ENCODE measurements at regions of chr6 and their contacts with region 1.

Region 1: GRCh38 chr6:125314019-125314581 is 12.3 kb upstream of the HDDC2 start:
- DNase-seq: peak; percentile 63 to 77 (median 69)
- ATAC-seq: peak; percentile 83 to 95 (median 91)
- H3K4me3 ChIP-seq: no peak overlapping the region
- H3K27ac ChIP-seq: peak overlapping the region in 2 of 12 donors; percentile 24 to 25
- H3K4me1 ChIP-seq: peaks cover 0 to 6% (median 1%) of the 10 kb centered on the region in 12 donors
- H3K27me3 ChIP-seq: peaks cover 0 to 3% (median 0%) of the 10 kb centered on the region in 9 donors
- CTCF ChIP-seq: peak; percentile 72 to 97 (median 88)
- POLR2A ChIP-seq: no peak

Region 2: DNA sequence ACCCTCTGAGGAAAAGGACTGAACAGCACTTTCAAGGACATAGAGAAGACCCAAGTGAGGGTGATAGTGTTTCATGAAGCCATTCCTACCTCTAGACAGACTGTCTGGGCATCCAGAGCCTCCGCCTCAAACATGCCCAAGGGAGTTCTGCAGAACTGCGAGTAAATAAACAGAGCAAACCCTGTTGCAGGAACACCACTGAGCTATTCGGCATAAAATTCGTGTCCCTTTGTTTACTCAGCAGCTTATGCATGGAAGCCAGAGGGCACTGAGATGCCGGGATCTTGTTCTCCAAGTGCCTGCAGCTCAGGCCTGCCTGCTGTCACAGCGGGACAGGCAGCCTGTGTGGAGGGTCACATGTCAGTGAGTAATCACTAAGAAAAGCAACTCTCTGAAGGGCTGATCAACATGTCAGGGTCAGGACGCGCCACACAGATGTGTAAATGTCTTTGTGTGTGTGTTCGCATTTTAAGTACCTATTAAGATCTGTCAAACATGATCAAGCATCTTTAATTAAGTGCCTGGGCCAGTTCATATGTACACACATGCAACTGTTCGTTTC is 270.4 kb after region 1 on chr6:
- intact Hi-C with region 1: loop called in 3 of 10 experiments (anchors 5 to 10 kb)
- DNase-seq: peak; percentile 61 to 84 (median 74)
- ATAC-seq: peak; percentile 93 to 96 (median 94)
- H3K4me3 ChIP-seq: no peak overlapping the region
- H3K27ac ChIP-seq: peak overlapping the region in 11 of 12 donors; percentile 31 to 82 (median 65)
- H3K4me1 ChIP-seq: peaks cover 0 to 26% (median 3%) of the 10 kb centered on the region in 12 donors
- H3K27me3 ChIP-seq: no peaks in the 10 kb centered on the region
- CTCF ChIP-seq: peak in 7 of 12 donors; percentile 19 to 55 (median 33)
- POLR2A ChIP-seq: peak in 1 of 2 donors; percentile 17

Region 3: GRCh38 chr6:125764121-125764671 is 450.1 kb after region 1 on chr6:
- intact Hi-C with region 1: loop called (anchors 1 to 5 kb)
- DNase-seq: no peak
- ATAC-seq: no peak
- H3K4me3 ChIP-seq: no peak overlapping the region
- H3K27ac ChIP-seq: peak overlapping the region in 4 of 12 donors; percentile 1 to 26 (median 16)
- H3K4me1 ChIP-seq: peaks cover 0 to 49% (median 4%) of the 10 kb centered on the region in 12 donors
- H3K27me3 ChIP-seq: peaks cover 0 to 7% (median 0%) of the 10 kb centered on the region in 9 donors
- CTCF ChIP-seq: no peak
- POLR2A ChIP-seq: no peak

Region 4: DNA sequence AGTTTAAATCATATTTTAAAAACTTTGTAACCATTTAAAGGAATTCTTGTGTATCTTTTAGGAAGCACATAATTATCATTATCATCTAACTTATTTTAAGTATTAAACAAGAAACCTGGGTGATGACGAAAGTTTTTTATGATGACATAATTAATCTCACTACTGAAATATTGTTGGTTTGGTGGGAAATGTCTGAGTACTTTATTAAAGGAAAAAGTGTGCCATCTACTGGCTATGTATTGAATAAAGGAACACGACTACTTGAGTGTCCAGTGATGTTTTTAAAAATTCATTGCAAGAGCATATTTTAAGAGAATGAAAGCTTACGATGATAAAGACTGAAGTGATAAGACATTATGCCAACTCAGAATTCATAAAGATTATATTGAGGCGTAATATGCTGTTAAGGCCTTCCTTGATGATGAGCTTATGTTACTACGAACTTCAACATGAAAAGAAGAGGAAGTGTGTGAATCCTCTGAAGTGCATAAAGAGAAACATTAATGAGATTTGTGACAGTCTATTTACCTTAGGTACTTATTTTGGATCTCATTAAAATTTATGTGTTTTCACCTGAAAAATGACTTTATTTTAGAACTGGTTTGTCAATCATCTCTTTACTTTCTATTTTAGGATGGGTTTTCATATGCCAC is 660.2 kb after region 1 on chr6:
- intact Hi-C with region 1: loop called in 5 of 10 experiments (anchors 5 kb)
- DNase-seq: no peak
- ATAC-seq: peak in 2 of 4 donors; percentile 48 to 54
- H3K4me3 ChIP-seq: no peak overlapping the region
- H3K27ac ChIP-seq: no peak overlapping the region
- H3K4me1 ChIP-seq: no peaks in the 10 kb centered on the region
- H3K27me3 ChIP-seq: no peaks in the 10 kb centered on the region
- CTCF ChIP-seq: peak; percentile 37 to 69 (median 59)
- POLR2A ChIP-seq: no peak

Measured in heart left ventricle (tissue), 16 donors.